ENCODE measurements at regions of chr2 and their contacts with region 1.

Region 1: GRCh38 chr2:25878361-25879132 is at the start of gene ASXL2:
- DNase-seq: peak; percentile 92 to 98 (median 97)
- H3K4me3 ChIP-seq: peak within 1 kb of the TSS; percentile 65 to 99 (median 92)
- H3K27ac ChIP-seq: peak within 1 kb of the TSS; percentile 73 to 98 (median 93)
- H3K27me3 ChIP-seq: no peaks in the 10 kb centered on the region
- CTCF ChIP-seq: peak in 45 of 56 donors; percentile 15 to 63 (median 40)
- total RNA-seq, gene ASXL2: 24.4 to 56.0 (median 34.7) TPM

Region 2: GRCh38 chr2:25673300-25674076 is 205.1 kb before region 1 on chr2 and contains the start of gene DTNB:
- intact Hi-C with region 1: loop called in 1 of 2 experiments (anchors 2 kb)
- DNase-seq: peak; percentile 49 to 84 (median 65)
- H3K4me3 ChIP-seq: peak within 1 kb of the TSS; percentile 67 to 97 (median 82)
- H3K27ac ChIP-seq: peak within 1 kb of the TSS; percentile 25 to 96 (median 89)
- H3K27me3 ChIP-seq: no peaks in the 10 kb centered on the region
- CTCF ChIP-seq: no peak
- total RNA-seq, gene DTNB: 74.4 to 162 (median 104) TPM

Region 3: DNA sequence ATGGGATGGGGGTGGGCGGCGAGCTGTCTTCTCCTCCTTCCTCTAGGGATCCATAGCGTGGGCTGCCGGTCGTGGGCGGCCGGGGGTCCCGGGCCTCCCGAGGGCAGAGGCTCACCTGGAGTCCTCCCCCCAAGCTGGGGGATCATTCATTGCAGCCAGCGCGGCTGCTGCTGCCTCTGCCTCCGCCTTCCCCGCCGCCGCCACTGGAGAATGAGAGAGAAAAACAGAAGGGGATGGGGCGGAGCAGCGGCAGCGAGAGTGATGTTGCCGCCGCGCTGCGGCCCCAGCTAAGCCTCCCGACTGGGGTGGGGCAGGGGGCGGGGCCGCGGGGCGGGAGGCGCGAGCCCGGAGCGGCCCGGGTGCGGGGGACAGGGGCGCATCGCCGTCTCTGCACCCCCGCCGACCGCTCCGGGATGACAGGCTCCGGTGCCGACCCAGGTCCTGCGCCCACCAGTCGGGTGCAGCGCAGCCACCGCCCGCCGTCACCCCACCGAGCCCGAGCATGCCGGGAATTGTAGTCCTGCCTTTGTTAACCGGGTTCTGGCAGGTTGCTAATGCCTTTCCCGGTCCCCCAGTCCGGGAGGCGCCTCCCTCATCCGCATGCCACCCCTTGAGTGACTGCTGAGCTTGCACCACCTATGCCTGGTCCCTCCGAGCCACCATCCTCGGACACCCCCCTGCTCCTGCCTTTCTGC is 103.9 kb after region 1 on chr2 and contains the start of gene KIF3C:
- intact Hi-C with region 1: loop called in 1 of 2 experiments (anchors 2 kb)
- DNase-seq: peak; percentile 69 to 93 (median 88)
- H3K4me3 ChIP-seq: peak within 1 kb of the TSS; percentile 69 to 98 (median 90)
- H3K27ac ChIP-seq: peak within 1 kb of the TSS; percentile 28 to 95 (median 89)
- H3K27me3 ChIP-seq: no peaks in the 10 kb centered on the region
- CTCF ChIP-seq: peak in 14 of 56 donors; percentile 2 to 33 (median 21)
- total RNA-seq, gene KIF3C: 82.2 to 364 (median 248) TPM

Region 4: DNA sequence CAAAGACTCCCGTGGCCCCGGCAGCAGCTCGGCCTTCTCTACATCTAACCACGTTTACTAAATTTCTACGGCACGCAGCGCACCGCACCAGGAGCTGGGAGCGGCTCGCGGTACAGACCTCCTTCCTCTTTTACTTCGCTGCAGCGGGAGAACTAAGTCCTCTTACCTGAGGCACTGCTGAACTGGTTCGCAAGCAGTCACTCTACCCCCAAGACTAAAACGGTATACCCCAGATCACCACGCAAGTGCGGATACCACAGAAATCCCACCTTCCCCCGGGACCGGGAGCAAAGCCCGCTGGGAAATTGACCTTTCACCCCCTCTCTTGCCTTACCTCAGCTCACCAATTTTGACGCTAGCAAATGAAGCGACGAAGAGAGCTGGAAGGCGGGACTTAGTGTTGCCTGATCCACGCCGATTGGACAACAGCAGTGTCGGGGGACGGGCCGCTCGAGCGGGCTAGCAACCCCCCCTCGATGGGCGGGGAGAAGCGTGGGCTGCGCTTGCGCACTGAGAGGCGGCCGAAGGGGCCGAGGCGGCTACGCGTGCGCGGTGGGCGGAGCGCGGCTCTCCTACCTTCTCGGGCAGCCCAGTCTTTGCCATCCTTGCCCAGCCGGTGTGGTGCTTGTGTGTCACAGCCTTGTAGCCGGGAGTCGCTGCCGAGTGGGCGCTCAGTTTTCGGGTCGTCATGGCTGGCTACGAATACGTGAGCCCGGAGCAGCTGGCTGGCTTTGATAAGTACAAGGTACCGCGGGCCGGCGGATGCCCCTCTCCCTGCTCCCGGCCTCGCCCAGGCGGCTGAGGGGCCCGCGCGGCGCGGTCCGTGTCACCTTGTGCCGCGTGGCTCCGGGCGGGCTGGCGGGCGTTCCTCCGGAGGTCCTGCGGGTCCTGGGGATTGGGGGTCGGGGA is 467.3 kb after region 1 on chr2 and contains the start of gene SELENOI:
- intact Hi-C with region 1: loop called in 1 of 2 experiments (anchors 10 kb)
- DNase-seq: peak; percentile 97 to 100 (median 99)
- H3K4me3 ChIP-seq: peak within 1 kb of the TSS; percentile 68 to 99 (median 93)
- H3K27ac ChIP-seq: peak within 1 kb of the TSS; percentile 58 to 97 (median 92)
- H3K27me3 ChIP-seq: no peaks in the 10 kb centered on the region
- CTCF ChIP-seq: peak in 22 of 56 donors; percentile 0 to 35 (median 24)
- total RNA-seq, gene SELENOI: 25.9 to 83.9 (median 61.6) TPM